ENCODE measurements at regions of chr3 and their contacts with region 1.

Region 1: DNA sequence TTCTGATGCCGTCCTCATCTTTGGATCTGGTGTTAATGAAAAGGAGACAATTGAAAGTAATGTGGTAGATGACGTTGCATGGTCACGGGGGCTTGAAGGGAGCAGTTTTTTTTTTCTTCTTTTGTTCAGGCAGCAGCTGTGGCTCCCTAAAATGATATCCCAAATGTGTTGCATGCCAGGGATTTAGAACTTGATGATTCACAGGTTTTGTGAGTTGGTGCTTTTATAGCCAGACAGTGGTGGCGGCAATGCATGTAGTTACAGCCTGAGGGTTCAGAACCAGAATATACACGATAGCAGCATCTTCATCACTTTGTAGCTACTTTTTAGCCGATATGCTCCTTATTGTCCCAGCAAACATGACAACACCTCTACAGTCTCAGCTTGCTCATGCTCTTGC is 133.4 kb downstream of the CHST2 start:
- DNase-seq: no peak
- H3K4me3 ChIP-seq: no peak overlapping the region
- H3K27ac ChIP-seq: no peak overlapping the region
- H3K4me1 ChIP-seq: peaks cover 2% of the 10 kb centered on the region
- H3K27me3 ChIP-seq: no peaks in the 10 kb centered on the region
- CTCF ChIP-seq: no peak
- EP300 ChIP-seq: no peak
- POLR2A ChIP-seq: no peak

Region 2: GRCh38 chr3:143158014-143158988 is 94.6 kb before region 1 on chr3:
- intact Hi-C with region 1: no loop called
- DNase-seq: no peak
- H3K4me3 ChIP-seq: no peak overlapping the region
- H3K27ac ChIP-seq: no peak overlapping the region
- H3K4me1 ChIP-seq: no peaks in the 10 kb centered on the region
- H3K27me3 ChIP-seq: no peaks in the 10 kb centered on the region
- CTCF ChIP-seq: no peak
- EP300 ChIP-seq: no peak
- POLR2A ChIP-seq: no peak

Region 3: DNA sequence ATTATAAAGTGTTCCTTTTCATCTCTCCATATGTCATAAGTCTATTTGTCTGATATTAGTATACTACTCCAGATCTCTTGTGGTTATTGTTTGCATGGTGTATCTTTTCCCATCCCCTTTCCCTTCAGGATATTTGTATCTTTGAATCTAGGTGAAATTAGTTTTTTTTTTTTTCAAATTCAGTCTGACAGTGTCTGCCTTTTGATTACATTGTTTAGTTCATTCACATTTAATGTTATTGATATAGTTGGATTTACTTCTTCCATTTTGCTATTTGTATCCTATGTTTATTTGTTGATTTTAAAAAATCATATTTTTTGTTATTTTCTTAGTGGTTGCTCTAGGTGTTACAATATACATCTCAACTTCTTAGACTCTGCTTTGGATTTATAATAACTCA is 149.7 kb after region 1 on chr3:
- intact Hi-C with region 1: loop called in 1 of 4 experiments (anchors 5 kb)
- DNase-seq: no peak
- H3K4me3 ChIP-seq: no peak overlapping the region
- H3K27ac ChIP-seq: no peak overlapping the region
- H3K4me1 ChIP-seq: no peaks in the 10 kb centered on the region
- H3K27me3 ChIP-seq: no peaks in the 10 kb centered on the region
- CTCF ChIP-seq: no peak
- EP300 ChIP-seq: no peak
- POLR2A ChIP-seq: no peak

Measured in ovary (tissue), 10 donors.